Naive thymus-derived CD4-positive, alpha-beta T cell (primary cell): ENCODE measurements at regions of chr20 and their contacts with region 1.

Region 1: DNA sequence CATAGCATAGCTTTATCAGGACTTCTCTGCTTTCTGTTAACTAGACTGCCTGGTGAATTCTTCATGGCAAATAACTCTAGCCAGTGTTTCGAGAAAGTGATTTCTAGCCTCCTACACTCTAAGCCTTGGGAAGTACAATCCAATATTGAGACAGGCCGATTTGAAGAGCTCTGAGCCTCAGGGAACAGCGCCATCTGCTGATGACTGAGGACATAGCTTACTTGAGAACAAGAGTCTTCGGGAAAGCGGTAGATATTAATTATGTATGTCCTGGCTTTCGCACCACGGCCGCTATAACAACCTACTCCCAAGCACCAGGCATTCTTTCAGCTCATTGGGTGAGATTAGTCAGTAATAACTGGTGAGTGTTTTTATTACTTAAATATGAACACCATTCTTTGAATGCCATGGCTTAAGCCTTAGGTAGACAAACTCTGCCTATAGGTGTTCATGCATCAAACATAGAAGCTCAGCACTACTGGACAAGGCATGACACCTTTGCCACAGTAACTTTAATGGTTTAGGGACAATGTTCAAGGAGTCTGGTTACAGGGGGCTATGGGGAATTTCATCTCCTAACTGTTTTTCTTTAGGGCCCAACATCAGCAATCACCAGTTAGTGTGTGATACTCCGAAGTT is 518.6 kb downstream of the BMP2 start:
- DNase-seq: peak in 1 of 9 donors; percentile 22
- ATAC-seq: no peak
- H3K4me3 ChIP-seq: no peak overlapping the region
- H3K4me3 Mint-ChIP-seq: no peak overlapping the region
- H3K27ac ChIP-seq: no peak overlapping the region
- H3K27ac Mint-ChIP-seq: no peak overlapping the region
- H3K4me1 ChIP-seq: no peaks in the 10 kb centered on the region
- H3K4me1 Mint-ChIP-seq: no peaks in the 10 kb centered on the region
- H3K27me3 ChIP-seq: no peaks in the 10 kb centered on the region
- H3K27me3 Mint-ChIP-seq: no peaks in the 10 kb centered on the region

Region 2: DNA sequence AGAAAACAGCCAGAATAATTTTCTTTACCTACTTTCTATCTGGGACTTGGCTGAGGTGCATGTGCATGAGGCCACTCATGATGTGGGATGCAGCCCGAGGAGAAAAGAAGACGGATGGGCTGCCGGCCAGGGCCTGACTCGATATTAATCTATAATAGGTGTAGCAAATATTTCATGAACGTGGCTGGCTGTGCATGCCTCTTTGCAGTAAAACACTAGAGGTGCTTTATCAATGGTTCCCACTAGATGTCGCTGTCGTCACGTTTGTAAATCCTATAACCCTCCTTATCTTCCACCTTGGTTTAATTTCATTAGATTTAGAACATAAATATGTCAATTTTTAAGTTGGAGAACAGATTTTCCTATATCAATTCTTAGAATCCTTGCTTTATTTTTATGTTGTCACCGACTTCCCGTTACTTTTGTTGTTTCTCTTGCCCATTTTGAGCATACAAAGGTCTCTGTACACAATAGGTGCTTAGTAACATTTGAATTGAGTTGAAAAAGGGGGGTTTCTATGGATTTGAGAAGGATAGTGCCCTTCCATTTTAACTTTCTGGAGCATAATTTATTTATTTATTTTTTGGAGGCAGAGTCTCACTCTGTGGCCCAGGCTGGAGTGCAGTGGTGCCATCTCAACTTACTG is 1143.6 kb before region 1 on chr20:
- CTCF ChIA-PET with region 1: no interaction called
- POLR2A ChIA-PET with region 1: no interaction called
- intact Hi-C with region 1: loop called in 1 of 2 experiments (anchors 5 kb)
- DNase-seq: peak in 6 of 9 donors; percentile 14 to 48 (median 29)
- ATAC-seq: peak; percentile 52
- H3K4me3 ChIP-seq: no peak overlapping the region
- H3K4me3 Mint-ChIP-seq: no peak overlapping the region
- H3K27ac ChIP-seq: no peak overlapping the region
- H3K27ac Mint-ChIP-seq: no peak overlapping the region
- H3K4me1 ChIP-seq: no peaks in the 10 kb centered on the region
- H3K4me1 Mint-ChIP-seq: no peaks in the 10 kb centered on the region
- H3K27me3 ChIP-seq: no peaks in the 10 kb centered on the region
- H3K27me3 Mint-ChIP-seq: peaks cover 0 to 40% (median 29%) of the 10 kb centered on the region in 5 donors

Region 3: GRCh38 chr20:7248281-7249201 is 37.5 kb before region 1 on chr20:
- CTCF ChIA-PET with region 1: no interaction called
- POLR2A ChIA-PET with region 1: no interaction called
- intact Hi-C with region 1: loop called in 1 of 2 experiments (anchors 1 kb)
- DNase-seq: no peak
- ATAC-seq: no peak
- H3K4me3 ChIP-seq: no peak overlapping the region
- H3K4me3 Mint-ChIP-seq: no peak overlapping the region
- H3K27ac ChIP-seq: no peak overlapping the region
- H3K27ac Mint-ChIP-seq: no peak overlapping the region
- H3K4me1 ChIP-seq: no peaks in the 10 kb centered on the region
- H3K4me1 Mint-ChIP-seq: no peaks in the 10 kb centered on the region
- H3K27me3 ChIP-seq: no peaks in the 10 kb centered on the region
- H3K27me3 Mint-ChIP-seq: no peaks in the 10 kb centered on the region